Aorta (tissue), 5 donors: ENCODE measurements at regions of chr12 and their contacts with region 1.

Region 1: GRCh38 chr12:109264095-109264942 is 44.8 kb downstream of the FOXN4 start:
- DNase-seq: peak; percentile 74 to 88
- ATAC-seq: peak; percentile 77
- H3K4me3 ChIP-seq: no peak overlapping the region
- H3K27ac ChIP-seq: no peak overlapping the region
- H3K4me1 ChIP-seq: no peaks in the 10 kb centered on the region
- H3K27me3 ChIP-seq: no peaks in the 10 kb centered on the region

Region 2: GRCh38 chr12:109336593-109336992 is 72.3 kb after region 1 on chr12:
- intact Hi-C with region 1: no loop called
- DNase-seq: no peak
- ATAC-seq: no peak
- H3K4me3 ChIP-seq: no peak overlapping the region
- H3K27ac ChIP-seq: no peak overlapping the region
- H3K4me1 ChIP-seq: no peaks in the 10 kb centered on the region
- H3K27me3 ChIP-seq: no peaks in the 10 kb centered on the region

Region 3: DNA sequence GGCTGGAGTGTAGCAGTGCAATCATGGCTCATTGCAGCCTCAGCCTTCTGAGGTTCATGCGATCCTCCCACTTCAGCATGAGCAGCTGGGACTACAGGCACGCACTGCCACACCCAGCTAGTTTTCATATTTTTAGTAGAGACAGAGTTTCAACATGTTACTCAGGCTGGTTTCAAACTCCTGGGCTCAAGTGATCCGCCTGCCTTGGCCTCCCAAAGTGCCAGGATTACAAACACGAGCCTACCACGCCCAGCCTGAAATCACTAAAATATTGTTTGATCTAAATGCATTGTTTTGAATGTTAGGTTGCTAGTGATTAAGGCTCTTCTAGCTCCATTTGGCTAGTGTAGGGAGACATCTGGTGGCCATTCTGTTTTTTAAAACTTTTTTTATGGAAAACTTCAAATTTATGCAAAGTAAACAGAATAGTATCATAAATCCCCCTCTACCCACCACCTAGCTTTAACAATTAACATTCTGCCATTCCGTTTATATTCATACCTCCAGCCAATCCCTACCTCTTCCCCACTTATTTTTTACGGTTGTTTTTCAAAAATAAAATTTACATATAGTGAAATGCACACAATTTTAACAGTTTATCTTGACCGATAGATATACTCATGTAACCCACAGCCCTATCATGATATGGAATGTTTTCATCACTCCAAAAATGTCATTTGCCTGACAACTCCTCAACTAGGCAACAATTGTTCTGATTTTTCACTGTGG is 121.2 kb after region 1 on chr12:
- intact Hi-C with region 1: loop called (anchors 1 to 5 kb)
- DNase-seq: peak in 1 of 2 donors; percentile 48
- ATAC-seq: peak; percentile 48
- H3K4me3 ChIP-seq: no peak overlapping the region
- H3K27ac ChIP-seq: no peak overlapping the region
- H3K4me1 ChIP-seq: no peaks in the 10 kb centered on the region
- H3K27me3 ChIP-seq: peaks cover 0 to 5% of the 10 kb centered on the region in 2 donors

Region 4: GRCh38 chr12:109393437-109394345 is 129.4 kb after region 1 on chr12:
- intact Hi-C with region 1: loop called (anchors 2 to 5 kb)
- DNase-seq: no peak
- ATAC-seq: peak; percentile 83
- H3K4me3 ChIP-seq: no peak overlapping the region
- H3K27ac ChIP-seq: no peak overlapping the region
- H3K4me1 ChIP-seq: no peaks in the 10 kb centered on the region
- H3K27me3 ChIP-seq: no peaks in the 10 kb centered on the region